ENCODE measurements at regions of chrX and their contacts with region 1.

Region 1: DNA sequence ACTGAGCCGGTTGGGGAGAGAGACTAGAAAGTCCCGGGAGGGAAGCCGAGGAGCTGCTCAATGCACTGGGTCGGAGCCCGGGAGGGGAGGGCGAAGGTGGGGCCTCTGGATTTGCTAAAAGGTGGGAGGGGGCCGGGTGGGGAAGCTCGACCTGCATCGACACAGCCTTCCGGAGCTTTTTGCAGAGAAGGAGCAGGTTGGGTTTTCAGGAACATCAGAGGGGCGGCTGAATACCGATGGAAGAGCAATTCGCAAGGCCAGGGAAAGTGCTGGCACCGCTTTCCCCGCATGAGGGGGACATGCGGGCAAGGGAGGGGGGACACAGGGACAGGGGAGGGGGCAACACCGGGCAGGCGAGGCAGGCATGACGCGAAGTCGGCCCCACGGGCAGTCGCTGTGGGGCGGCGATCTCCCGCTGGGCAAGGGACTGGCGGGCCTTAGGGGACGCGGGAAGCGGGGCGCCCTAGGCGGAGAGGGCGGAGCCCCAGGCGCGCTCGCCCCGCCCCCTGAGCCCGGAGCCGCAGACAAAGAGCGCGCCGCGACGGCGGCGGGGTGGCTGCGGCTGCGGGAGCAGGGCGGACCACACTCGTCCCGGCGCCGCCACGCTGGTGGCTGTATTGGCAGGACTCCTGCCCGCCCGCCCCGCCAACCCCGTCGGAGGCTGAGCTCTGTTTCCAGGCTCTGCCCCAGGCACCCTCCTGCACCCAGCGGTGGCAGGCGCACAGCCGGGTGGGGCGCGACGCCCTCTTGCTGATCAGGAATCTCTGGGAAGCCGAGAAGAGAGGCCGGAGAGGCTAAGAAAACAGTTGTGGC is 11.6 kb downstream of the PDZD4 start:
- DNase-seq: peak; percentile 71
- ATAC-seq: peak; percentile 78
- H3K4me3 Mint-ChIP-seq: peak overlapping the region; percentile 52
- H3K27ac Mint-ChIP-seq: no peak overlapping the region
- H3K4me1 Mint-ChIP-seq: peaks cover 47% of the 10 kb centered on the region
- H3K27me3 Mint-ChIP-seq: no peaks in the 10 kb centered on the region

Region 2: GRCh38 chrX:153829799-153830634 is 11.2 kb after region 1 on chrX and contains the start of gene PDZD4:
- CTCF ChIA-PET with region 1: no interaction called
- POLR2A ChIA-PET with region 1: no interaction called
- intact Hi-C with region 1: loop called in 1 of 2 experiments (anchors 1 kb)
- DNase-seq: peak; percentile 22
- ATAC-seq: no peak
- H3K4me3 Mint-ChIP-seq: peak within 1 kb of the TSS; percentile 36
- H3K27ac Mint-ChIP-seq: no peak within 1 kb of the TSS
- H3K4me1 Mint-ChIP-seq: peaks cover 14% of the 10 kb centered on the region
- H3K27me3 Mint-ChIP-seq: no peaks in the 10 kb centered on the region
- total RNA-seq, gene PDZD4: 2.4 to 4.3 TPM

Region 3: DNA sequence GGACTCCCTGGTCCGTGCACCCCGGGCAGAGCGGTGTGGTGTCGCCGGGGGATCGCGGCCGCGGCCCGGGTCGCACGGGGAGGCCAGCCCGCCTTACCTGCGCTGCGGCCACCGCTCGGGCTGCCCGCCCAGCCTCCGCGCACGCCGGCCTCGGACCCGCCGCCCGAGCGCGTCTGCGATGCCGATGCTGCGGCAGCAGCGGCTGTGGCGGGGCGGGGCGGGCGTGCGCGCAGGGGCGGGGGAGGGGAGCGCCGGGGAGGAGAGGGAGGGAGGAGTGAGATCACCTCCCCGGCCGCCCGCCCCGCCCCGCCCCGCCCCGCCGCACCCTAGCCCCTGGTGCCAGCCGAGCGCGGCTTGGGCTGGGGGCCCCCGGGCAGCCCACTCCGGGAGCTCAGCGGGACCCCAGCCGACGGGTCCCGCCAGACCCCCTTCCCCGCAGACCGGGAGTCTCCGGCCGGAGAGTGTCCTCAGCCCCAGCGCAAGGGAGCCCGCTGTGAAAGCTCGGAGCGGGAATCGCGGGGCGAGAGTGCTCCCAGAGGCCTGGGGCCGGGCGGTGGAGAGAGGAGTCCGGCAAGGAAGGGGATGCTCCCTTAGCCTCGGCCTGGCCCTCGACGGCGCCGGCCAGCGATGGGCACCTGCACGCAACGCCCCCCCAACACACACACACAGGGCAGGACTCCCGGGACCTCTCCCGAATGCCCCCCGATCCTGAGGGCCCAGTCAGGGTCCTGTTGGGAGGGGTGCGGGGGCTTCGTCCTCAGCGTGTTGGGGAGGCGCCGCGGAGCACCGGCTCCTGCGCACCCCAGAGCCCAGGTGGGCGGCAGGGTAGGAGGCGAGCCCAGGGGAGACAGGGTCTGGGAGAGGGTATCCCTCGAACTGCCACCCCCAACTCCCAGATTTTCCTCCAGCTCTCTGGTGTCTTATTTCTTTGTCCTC is 67.5 kb after region 1 on chrX and contains the start of gene L1CAM:
- CTCF ChIA-PET with region 1: interaction called, 3 read pairs
- POLR2A ChIA-PET with region 1: no interaction called
- intact Hi-C with region 1: loop called in 1 of 2 experiments (anchors 5 kb)
- DNase-seq: peak; percentile 65
- ATAC-seq: peak; percentile 66
- H3K4me3 Mint-ChIP-seq: peak within 1 kb of the TSS; percentile 41
- H3K27ac Mint-ChIP-seq: no peak within 1 kb of the TSS
- H3K4me1 Mint-ChIP-seq: peaks cover 4% of the 10 kb centered on the region
- H3K27me3 Mint-ChIP-seq: peaks cover 12% of the 10 kb centered on the region
- total RNA-seq, gene L1CAM: 0.47 to 0.57 TPM

Region 4: GRCh38 chrX:153900831-153901752 is 82.3 kb after region 1 on chrX:
- CTCF ChIA-PET with region 1: no interaction called
- POLR2A ChIA-PET with region 1: no interaction called
- intact Hi-C with region 1: loop called in 1 of 2 experiments (anchors 5 kb)
- DNase-seq: peak; percentile 78
- ATAC-seq: peak; percentile 83
- H3K4me3 Mint-ChIP-seq: peak overlapping the region; percentile 49
- H3K27ac Mint-ChIP-seq: peak overlapping the region; percentile 47
- H3K4me1 Mint-ChIP-seq: peaks cover 41% of the 10 kb centered on the region
- H3K27me3 Mint-ChIP-seq: no peaks in the 10 kb centered on the region